K562 (cell line): ENCODE measurements at regions of chr5 and their contacts with region 1.

Region 1: GRCh38 chr5:178130604-178131485 is at the start of gene RMND5B:
- DNase-seq: peak; percentile 89 to 94 (median 92)
- ATAC-seq: peak; percentile 85
- H3K4me3 ChIP-seq: peak within 1 kb of the TSS; percentile 98
- H3K27ac ChIP-seq: peak within 1 kb of the TSS; percentile 97
- H3K4me1 ChIP-seq: peaks cover 24 to 48% of the 10 kb centered on the region in 2 experiments
- H3K27me3 ChIP-seq: no peaks in the 10 kb centered on the region
- CTCF ChIP-seq: 0 out of 6 replicates have a peak, but pooled peaks of 1 of the 3 experiments have one; percentile 0
- EP300 ChIP-seq: peak; percentile 49
- POLR2A ChIP-seq: peak; percentile 88
- RAD21 ChIP-seq: no peak
- polyA plus RNA-seq, gene RMND5B: 2.6 to 4.4 TPM

Region 2: DNA sequence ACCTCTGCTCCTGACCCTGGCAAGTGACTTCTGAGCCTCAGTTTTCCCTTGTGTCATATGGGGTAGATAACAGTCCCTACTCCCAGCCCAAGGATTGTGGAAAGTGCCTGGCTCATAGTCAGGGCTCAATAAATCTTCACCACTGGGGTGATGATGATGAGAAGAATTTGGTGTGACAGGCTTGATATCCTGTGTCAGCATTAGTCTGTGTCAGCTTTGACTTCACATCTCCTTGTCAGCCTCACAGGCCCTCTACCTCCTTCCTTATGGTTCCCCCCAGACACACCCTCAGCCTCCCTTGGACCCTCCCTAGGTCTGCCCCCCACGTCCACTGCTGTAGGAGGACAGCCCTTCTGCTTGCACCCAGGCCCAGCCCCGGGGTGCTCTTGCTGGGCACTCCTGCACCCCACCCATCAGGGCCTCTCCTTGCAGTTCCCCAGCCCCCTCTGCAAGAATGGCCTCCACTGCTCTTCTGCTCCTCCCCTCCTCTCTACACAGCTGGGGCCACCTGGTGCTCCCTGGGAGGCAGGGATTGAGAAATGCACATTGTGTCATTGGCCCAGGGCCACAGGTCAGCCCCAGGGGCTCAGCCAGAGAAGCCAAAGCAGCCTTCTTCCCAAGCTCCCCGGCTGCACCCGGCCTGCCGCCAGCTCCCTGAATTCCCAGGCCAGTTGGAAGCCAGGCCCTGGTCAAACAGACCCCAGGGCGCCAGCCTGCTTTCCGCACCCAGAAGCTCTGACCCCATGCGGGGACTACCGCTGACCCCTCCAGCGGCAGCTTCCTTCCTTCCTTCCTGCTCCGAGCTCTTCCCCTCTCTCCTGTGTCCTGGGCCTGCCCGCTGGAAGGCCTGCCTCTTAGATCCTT is 1036.4 kb before region 1 on chr5:
- CTCF ChIA-PET with region 1: no interaction called
- POLR2A ChIA-PET with region 1: no interaction called
- in situ Hi-C with region 1: no loop called
- intact Hi-C with region 1: no loop called
- DNase-seq: no peak
- ATAC-seq: no peak
- H3K4me3 ChIP-seq: no peak overlapping the region
- H3K27ac ChIP-seq: no peak overlapping the region
- H3K4me1 ChIP-seq: peaks cover 0 to 53% of the 10 kb centered on the region in 2 experiments; a peak in 2 of 5 replicates
- H3K27me3 ChIP-seq: no peaks in the 10 kb centered on the region
- CTCF ChIP-seq: no peak
- EP300 ChIP-seq: no peak
- POLR2A ChIP-seq: no peak
- RAD21 ChIP-seq: no peak

Region 3: GRCh38 chr5:178113199-178113787 is 17.6 kb before region 1 on chr5 and contains the start of gene N4BP3:
- CTCF ChIA-PET with region 1: no interaction called
- POLR2A ChIA-PET with region 1: interaction called, 4 read pairs
- in situ Hi-C with region 1: no loop called
- intact Hi-C with region 1: loop called (anchors 1 kb)
- DNase-seq: peak; percentile 90 to 98 (median 97)
- ATAC-seq: peak; percentile 92
- H3K4me3 ChIP-seq: peak within 1 kb of the TSS; percentile 66
- H3K27ac ChIP-seq: peak within 1 kb of the TSS; percentile 60
- H3K4me1 ChIP-seq: peaks cover 31 to 48% of the 10 kb centered on the region in 2 experiments; a peak in 4 of 5 replicates
- H3K27me3 ChIP-seq: no peaks in the 10 kb centered on the region
- CTCF ChIP-seq: peak; percentile 19 to 61 (median 34); a peak in 4 of 6 replicates
- EP300 ChIP-seq: 0 out of 2 replicates have a peak, but pooled peaks have one; percentile 43
- POLR2A ChIP-seq: peak; percentile 42; the same call in 1 of the 2 replicates
- RAD21 ChIP-seq: peak in 1 of 2 experiments; percentile 18; a peak in 2 of 4 replicates
- polyA plus RNA-seq, gene N4BP3: 0.06 to 0.10 TPM

Region 4: DNA sequence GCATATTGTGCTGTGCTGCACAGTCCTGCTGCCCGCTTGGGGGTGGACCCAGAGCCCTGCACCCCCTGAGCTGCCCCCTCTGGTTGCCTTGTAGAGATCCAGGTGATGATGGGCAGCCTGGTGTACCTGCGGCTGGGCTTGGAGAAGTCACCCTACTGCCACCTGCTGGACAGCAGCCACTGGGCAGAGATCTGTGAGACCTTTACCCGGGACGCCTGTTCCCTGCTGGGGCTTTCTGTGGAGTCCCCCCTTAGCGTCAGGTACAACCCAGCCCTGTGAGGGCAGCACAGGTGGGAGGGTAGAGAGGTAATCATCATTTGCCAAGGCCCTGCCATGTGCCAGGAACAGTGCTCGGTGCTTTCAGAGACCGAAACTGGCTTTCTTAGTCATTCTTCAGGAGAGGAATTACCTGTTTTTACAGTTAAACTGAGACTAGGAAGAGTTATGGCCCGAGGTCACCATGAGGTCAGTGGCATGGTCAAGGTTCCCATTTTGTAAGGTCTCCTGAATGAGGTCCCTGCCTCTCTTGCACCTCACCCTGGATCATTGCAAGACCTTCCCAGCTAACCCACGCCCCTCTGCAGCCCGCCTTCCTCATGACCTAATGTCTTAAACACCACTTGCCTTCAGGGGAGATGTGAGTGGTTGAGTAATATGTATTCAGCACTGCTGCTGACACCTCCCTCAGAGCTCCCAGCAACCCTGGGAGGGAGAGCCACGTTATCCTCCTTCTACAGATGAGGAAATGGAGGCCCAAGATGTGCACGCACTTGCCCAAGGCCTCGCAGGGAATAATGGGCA is 15.4 kb after region 1 on chr5:
- CTCF ChIA-PET with region 1: no interaction called
- POLR2A ChIA-PET with region 1: interaction called, 20 read pairs
- in situ Hi-C with region 1: no loop called
- intact Hi-C with region 1: no loop called
- DNase-seq: peak; percentile 64 to 75 (median 69)
- ATAC-seq: peak; percentile 88
- H3K4me3 ChIP-seq: no peak overlapping the region
- H3K27ac ChIP-seq: no peak overlapping the region
- H3K4me1 ChIP-seq: peaks cover 0 to 12% of the 10 kb centered on the region in 2 experiments; a peak in 3 of 5 replicates
- H3K27me3 ChIP-seq: no peaks in the 10 kb centered on the region
- CTCF ChIP-seq: peak; percentile 78 to 87 (median 82)
- EP300 ChIP-seq: no peak
- POLR2A ChIP-seq: peak; percentile 35; the same call in 1 of the 2 replicates
- RAD21 ChIP-seq: peak; percentile 63 to 80

Region 5: GRCh38 chr5:179051784-179052183 is 920.9 kb after region 1 on chr5:
- CTCF ChIA-PET with region 1: no interaction called
- POLR2A ChIA-PET with region 1: no interaction called
- in situ Hi-C with region 1: no loop called
- intact Hi-C with region 1: no loop called
- DNase-seq: no peak
- ATAC-seq: no peak
- H3K4me3 ChIP-seq: no peak overlapping the region
- H3K27ac ChIP-seq: no peak overlapping the region
- H3K4me1 ChIP-seq: no peaks in the 10 kb centered on the region; a peak in 1 of 5 replicates
- H3K27me3 ChIP-seq: no peaks in the 10 kb centered on the region
- CTCF ChIP-seq: no peak
- EP300 ChIP-seq: no peak
- POLR2A ChIP-seq: no peak
- RAD21 ChIP-seq: no peak